Activated CD4-positive, alpha-beta memory T cell treated with anti-CD3 and anti-CD28 coated beads, Interleukin-2, amount 10 ng/mL, durations not matched to agents 7 days and 5 days (primary cell): ENCODE measurements at regions of chr19 and their contacts with region 1.

Region 1: GRCh38 chr19:38402967-38403861 is at the start of gene FAM98C:
- DNase-seq: peak; percentile 98
- H3K4me3 Mint-ChIP-seq: peak within 1 kb of the TSS; percentile 93
- H3K27ac Mint-ChIP-seq: peak within 1 kb of the TSS; percentile 92
- H3K4me1 Mint-ChIP-seq: peaks cover 26% of the 10 kb centered on the region
- H3K27me3 Mint-ChIP-seq: peaks cover 6% of the 10 kb centered on the region
- total RNA-seq, gene FAM98C: 34.7 to 36.5 TPM

Region 2: DNA sequence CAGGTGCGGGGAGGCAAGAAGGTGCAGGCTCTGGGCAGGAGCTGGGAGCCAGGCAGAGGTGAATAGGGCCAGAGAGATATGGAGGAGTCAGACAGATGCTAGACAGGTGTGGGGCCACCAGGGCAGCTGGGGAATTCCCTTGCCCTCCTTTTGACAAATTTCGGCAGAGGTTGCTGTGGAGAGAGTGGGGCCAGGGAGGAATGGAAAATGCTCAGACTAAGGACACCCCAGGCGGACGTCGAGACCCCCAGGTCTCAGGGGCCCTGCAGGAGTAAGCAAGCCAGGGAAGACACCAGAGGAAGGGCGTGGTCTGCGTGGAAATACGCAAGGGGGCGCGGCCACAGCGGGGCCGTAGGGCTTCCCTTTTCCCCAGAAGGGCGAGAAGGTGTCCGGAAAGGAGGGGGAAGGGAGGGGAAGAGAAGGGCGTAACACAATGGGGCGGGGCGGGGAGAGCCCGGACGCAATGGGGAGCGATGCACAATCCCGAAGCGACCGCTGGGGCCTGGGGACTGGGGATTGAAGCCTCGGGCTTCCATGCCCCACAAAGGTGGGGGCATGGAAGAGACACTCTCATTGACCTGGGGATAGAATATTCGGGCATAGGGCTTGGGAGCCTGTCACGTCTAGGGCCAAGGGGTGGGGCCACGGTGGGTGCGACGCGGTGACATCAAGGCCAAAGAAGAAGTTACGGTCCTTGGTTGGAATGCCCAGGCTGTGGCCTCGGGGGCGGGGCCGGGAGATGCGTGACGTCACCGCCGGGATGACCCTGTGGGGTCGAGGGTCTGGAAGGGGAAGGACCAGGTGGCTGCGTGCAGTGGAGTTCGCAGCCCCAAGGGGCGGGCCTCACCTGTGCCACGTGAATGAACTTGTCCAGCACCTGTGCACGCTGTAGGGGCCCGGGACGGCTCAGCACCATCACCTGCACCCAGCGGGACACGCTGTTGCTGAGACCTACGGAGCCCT is 14.6 kb after region 1 on chr19:
- CTCF ChIA-PET with region 1: interaction called, 16 read pairs
- POLR2A ChIA-PET with region 1: interaction called, 35 read pairs
- DNase-seq: peak; percentile 82
- H3K4me3 Mint-ChIP-seq: peak overlapping the region; percentile 72
- H3K27ac Mint-ChIP-seq: peak overlapping the region; percentile 82
- H3K4me1 Mint-ChIP-seq: peaks cover 30% of the 10 kb centered on the region
- H3K27me3 Mint-ChIP-seq: no peaks in the 10 kb centered on the region

Region 3: GRCh38 chr19:38478273-38478967 is 75.2 kb after region 1 on chr19:
- CTCF ChIA-PET with region 1: interaction called, 20 read pairs
- POLR2A ChIA-PET with region 1: no interaction called
- DNase-seq: peak; percentile 20
- H3K4me3 Mint-ChIP-seq: no peak overlapping the region
- H3K27ac Mint-ChIP-seq: no peak overlapping the region
- H3K4me1 Mint-ChIP-seq: no peaks in the 10 kb centered on the region
- H3K27me3 Mint-ChIP-seq: no peaks in the 10 kb centered on the region

Region 4: GRCh38 chr19:38524369-38524768 is 121.2 kb after region 1 on chr19:
- CTCF ChIA-PET with region 1: no interaction called
- POLR2A ChIA-PET with region 1: no interaction called
- DNase-seq: no peak
- H3K4me3 Mint-ChIP-seq: no peak overlapping the region
- H3K27ac Mint-ChIP-seq: no peak overlapping the region
- H3K4me1 Mint-ChIP-seq: no peaks in the 10 kb centered on the region
- H3K27me3 Mint-ChIP-seq: peaks cover 2% of the 10 kb centered on the region

Region 5: GRCh38 chr19:38618590-38619360 is 215.6 kb after region 1 on chr19 and contains the start of gene EIF3K:
- CTCF ChIA-PET with region 1: interaction called, 27 read pairs
- POLR2A ChIA-PET with region 1: interaction called, 12 read pairs
- DNase-seq: peak; percentile 98
- H3K4me3 Mint-ChIP-seq: peak within 1 kb of the TSS; percentile 99
- H3K27ac Mint-ChIP-seq: peak within 1 kb of the TSS; percentile 93
- H3K4me1 Mint-ChIP-seq: peaks cover 51% of the 10 kb centered on the region
- H3K27me3 Mint-ChIP-seq: no peaks in the 10 kb centered on the region
- total RNA-seq, gene EIF3K: 297 TPM

Region 6: DNA sequence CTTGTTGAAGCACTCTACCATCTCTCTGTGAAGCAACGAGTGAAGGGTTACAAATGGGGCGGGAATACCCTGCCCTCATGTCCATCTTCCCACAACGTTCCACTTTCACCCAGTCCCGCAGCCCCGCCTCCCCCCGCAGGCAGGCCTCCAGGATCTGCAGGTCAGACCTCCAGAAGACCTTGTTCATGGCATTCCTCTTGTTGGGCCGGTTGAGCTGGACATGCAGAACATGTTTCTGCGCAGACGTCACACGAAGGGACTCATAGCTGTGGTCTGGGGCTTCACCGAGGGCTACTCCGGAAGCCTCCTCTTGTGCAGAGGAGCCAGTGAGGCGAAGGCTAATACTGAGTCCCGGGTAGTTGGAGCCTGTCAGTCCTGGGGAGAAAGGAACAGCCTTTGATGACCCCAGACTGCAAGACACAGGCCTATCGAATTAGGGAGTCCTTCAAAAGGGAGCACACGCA is 428.0 kb after region 1 on chr19:
- CTCF ChIA-PET with region 1: interaction called, 13 read pairs
- POLR2A ChIA-PET with region 1: no interaction called
- DNase-seq: no peak
- H3K4me3 Mint-ChIP-seq: peak overlapping the region; percentile 85
- H3K27ac Mint-ChIP-seq: peak overlapping the region; percentile 80
- H3K4me1 Mint-ChIP-seq: peaks cover 34% of the 10 kb centered on the region
- H3K27me3 Mint-ChIP-seq: no peaks in the 10 kb centered on the region

Region 7: DNA sequence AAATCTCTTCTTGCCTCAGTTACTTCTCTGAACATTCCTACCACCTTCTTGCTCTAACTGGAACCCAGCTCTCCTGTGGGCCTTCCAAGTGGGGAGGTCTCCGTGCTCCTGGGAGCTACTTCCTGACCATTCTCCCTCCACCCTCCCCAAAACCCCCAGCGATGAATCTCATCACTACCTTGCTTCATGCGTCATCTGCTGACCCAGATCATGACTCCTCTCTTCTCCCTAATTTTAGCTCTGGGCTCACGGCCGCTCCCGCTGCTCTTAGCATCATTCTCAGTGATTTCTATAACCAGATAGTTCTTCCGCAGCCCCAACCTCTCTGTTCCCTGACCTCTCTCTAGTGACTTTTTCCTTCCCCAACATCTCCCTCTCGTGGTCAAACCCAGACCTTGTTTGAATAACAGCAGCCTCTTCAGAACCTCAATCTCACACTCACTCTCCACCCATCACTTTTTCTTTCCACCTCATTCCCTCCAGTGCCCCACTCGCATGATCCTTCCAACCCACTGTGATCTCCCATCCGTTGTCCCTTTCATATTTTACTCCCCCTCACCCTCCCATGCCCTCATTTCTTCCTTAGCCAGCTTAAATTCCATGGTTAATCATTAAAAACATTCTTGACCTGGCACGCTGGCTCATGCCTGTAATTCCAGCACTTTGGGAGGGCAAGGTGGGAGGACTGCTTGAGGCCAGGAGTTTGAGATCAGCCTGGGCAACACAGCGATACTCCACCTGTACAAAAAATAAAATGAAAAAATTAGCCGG is 549.4 kb after region 1 on chr19:
- CTCF ChIA-PET with region 1: interaction called, 10 read pairs
- POLR2A ChIA-PET with region 1: no interaction called
- DNase-seq: peak; percentile 52
- H3K4me3 Mint-ChIP-seq: no peak overlapping the region
- H3K27ac Mint-ChIP-seq: no peak overlapping the region
- H3K4me1 Mint-ChIP-seq: peaks cover 15% of the 10 kb centered on the region
- H3K27me3 Mint-ChIP-seq: peaks cover 27% of the 10 kb centered on the region